K562 (cell line): ENCODE measurements at regions of chr18 and their contacts with region 1.

Region 1: GRCh38 chr18:55839343-55839742 is 251.4 kb upstream of the TCF4 start:
- DNase-seq: no peak
- ATAC-seq: no peak
- H3K4me3 ChIP-seq: no peak overlapping the region
- H3K27ac ChIP-seq: no peak overlapping the region
- H3K4me1 ChIP-seq: no peaks in the 10 kb centered on the region; a peak in 1 of 5 replicates
- H3K27me3 ChIP-seq: no peaks in the 10 kb centered on the region
- CTCF ChIP-seq: no peak
- EP300 ChIP-seq: no peak
- POLR2A ChIP-seq: no peak
- RAD21 ChIP-seq: no peak

Region 2: GRCh38 chr18:55384551-55385275 is 454.6 kb before region 1 on chr18:
- CTCF ChIA-PET with region 1: no interaction called
- POLR2A ChIA-PET with region 1: no interaction called
- in situ Hi-C with region 1: no loop called
- intact Hi-C with region 1: loop called (anchors 5 kb)
- DNase-seq: peak; percentile 34 to 57 (median 52)
- ATAC-seq: peak; percentile 53; the same call in 1 of the 3 replicates
- H3K4me3 ChIP-seq: no peak overlapping the region
- H3K27ac ChIP-seq: no peak overlapping the region
- H3K4me1 ChIP-seq: peaks cover 8 to 26% of the 10 kb centered on the region in 2 experiments
- H3K27me3 ChIP-seq: no peaks in the 10 kb centered on the region
- CTCF ChIP-seq: peak; percentile 62 to 64 (median 63)
- EP300 ChIP-seq: no peak
- POLR2A ChIP-seq: no peak
- RAD21 ChIP-seq: peak; percentile 15 to 62